ENCODE measurements at regions of chr17 and their contacts with region 1.

Region 1: GRCh38 chr17:21098934-21099689 is 27.7 kb upstream of the DHRS7B start:
- DNase-seq: peak; percentile 91
- ATAC-seq: peak; percentile 100
- H3K4me3 Mint-ChIP-seq: peak overlapping the region; percentile 95
- H3K27ac Mint-ChIP-seq: peak overlapping the region; percentile 97
- H3K4me1 Mint-ChIP-seq: peaks cover 29% of the 10 kb centered on the region
- H3K27me3 Mint-ChIP-seq: no peaks in the 10 kb centered on the region

Region 2: GRCh38 chr17:21019976-21020586 is 79.0 kb before region 1 on chr17:
- CTCF ChIA-PET with region 1: interaction called, 12 read pairs
- POLR2A ChIA-PET with region 1: no interaction called
- DNase-seq: peak; percentile 57
- ATAC-seq: peak; percentile 78
- H3K4me3 Mint-ChIP-seq: no peak overlapping the region
- H3K27ac Mint-ChIP-seq: no peak overlapping the region
- H3K4me1 Mint-ChIP-seq: peaks cover 32% of the 10 kb centered on the region
- H3K27me3 Mint-ChIP-seq: no peaks in the 10 kb centered on the region

Region 3: GRCh38 chr17:21034340-21035235 is 64.5 kb before region 1 on chr17:
- CTCF ChIA-PET with region 1: interaction called, 24 read pairs
- POLR2A ChIA-PET with region 1: interaction called, 4 read pairs
- DNase-seq: peak; percentile 79
- ATAC-seq: peak; percentile 84
- H3K4me3 Mint-ChIP-seq: peak overlapping the region; percentile 73
- H3K27ac Mint-ChIP-seq: peak overlapping the region; percentile 91
- H3K4me1 Mint-ChIP-seq: peaks cover 78% of the 10 kb centered on the region
- H3K27me3 Mint-ChIP-seq: no peaks in the 10 kb centered on the region

Region 4: DNA sequence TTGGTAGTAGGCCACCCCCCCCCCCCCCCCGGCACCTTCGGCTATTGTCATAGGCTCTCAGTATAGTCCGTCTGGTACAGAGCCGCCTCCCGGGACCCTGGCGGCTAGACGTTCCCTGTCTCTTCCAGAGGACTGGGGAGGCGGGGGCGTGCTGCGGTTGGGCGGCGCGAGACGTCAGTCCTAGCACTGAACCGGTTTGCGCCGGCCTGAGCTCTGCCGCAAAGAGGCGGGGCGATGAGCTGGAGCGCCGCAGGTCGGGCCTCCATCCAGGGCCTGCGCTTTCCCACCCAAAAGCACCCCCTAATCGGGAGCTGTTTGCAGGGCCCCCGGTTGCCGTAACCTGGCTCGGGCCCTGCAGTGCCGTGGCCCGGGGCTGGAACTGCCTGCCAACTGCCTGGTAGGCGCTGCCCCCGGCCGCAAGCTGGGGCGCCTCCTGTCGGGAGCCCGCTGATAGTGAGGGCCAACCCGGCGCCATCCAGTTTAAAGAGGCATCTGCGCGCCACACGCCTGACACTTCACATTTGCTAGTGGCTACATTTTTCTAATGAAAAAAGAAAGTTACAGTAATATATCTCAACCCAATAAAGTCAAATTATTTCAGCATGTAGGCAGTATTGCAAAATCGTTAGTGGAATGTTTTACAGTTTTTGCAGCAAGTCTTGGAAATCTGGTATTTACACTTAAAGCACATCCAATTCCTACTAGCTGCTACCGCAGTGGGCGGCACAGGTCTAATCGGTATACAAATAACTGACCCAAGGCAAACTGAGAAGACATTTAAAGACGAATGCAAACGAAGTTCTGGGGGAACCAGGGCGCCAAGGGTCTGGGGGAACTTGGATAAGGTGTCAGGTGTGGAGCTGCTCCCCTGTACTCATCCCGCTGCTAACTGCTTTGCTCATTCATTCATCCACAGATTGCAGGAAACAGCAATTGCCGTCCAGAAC is 55.6 kb before region 1 on chr17:
- CTCF ChIA-PET with region 1: interaction called, 50 read pairs
- POLR2A ChIA-PET with region 1: interaction called, 39 read pairs
- DNase-seq: peak; percentile 98
- ATAC-seq: peak; percentile 85
- H3K4me3 Mint-ChIP-seq: peak overlapping the region; percentile 76
- H3K27ac Mint-ChIP-seq: peak overlapping the region; percentile 89
- H3K4me1 Mint-ChIP-seq: peaks cover 29% of the 10 kb centered on the region
- H3K27me3 Mint-ChIP-seq: peaks cover 2% of the 10 kb centered on the region

Region 5: GRCh38 chr17:21113049-21113690 is 14.1 kb after region 1 on chr17:
- CTCF ChIA-PET with region 1: interaction called, 28 read pairs
- POLR2A ChIA-PET with region 1: interaction called, 3 read pairs
- DNase-seq: no peak
- ATAC-seq: no peak
- H3K4me3 Mint-ChIP-seq: no peak overlapping the region
- H3K27ac Mint-ChIP-seq: no peak overlapping the region
- H3K4me1 Mint-ChIP-seq: no peaks in the 10 kb centered on the region
- H3K27me3 Mint-ChIP-seq: peaks cover 6% of the 10 kb centered on the region

Region 6: GRCh38 chr17:21119247-21119918 is 20.3 kb after region 1 on chr17:
- CTCF ChIA-PET with region 1: interaction called, 17 read pairs
- POLR2A ChIA-PET with region 1: interaction called, 3 read pairs
- DNase-seq: peak; percentile 81
- ATAC-seq: peak; percentile 84
- H3K4me3 Mint-ChIP-seq: no peak overlapping the region
- H3K27ac Mint-ChIP-seq: no peak overlapping the region
- H3K4me1 Mint-ChIP-seq: peaks cover 11% of the 10 kb centered on the region
- H3K27me3 Mint-ChIP-seq: peaks cover 8% of the 10 kb centered on the region